ENCODE measurements at regions of chr12 and their contacts with region 1.

Region 1: DNA sequence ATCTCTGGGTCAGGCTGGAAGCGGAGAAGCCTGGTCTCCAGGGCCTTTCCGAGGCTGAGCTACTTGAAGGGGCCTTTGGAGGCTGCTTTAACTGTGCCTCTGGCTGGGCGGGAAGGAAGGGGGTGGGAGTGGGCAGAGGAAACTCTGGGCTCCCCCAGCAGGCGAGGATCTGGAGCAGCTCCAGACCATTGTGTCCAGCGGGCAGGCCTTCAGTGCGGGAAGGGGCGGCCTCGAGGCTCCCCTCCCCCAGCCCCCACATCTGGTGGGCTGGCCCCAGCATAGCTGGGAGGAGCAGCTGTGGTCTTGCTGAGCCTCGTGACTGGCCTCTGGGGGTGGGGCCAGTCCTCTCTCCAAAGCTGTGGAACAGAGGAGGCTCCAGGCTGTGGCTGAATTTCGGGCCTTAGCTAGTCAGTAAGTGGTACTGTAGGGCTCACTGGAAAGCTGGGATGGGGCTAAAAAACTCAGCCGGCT is 3.4 kb downstream of the TAMALIN start:
- DNase-seq: no peak
- H3K4me3 ChIP-seq: no peak overlapping the region
- H3K27ac ChIP-seq: no peak overlapping the region
- H3K4me1 ChIP-seq: peaks cover 11% of the 10 kb centered on the region
- H3K27me3 ChIP-seq: peaks cover 19% of the 10 kb centered on the region
- CTCF ChIP-seq: no peak

Region 2: GRCh38 chr12:52082988-52083637 is 72.9 kb after region 1 on chr12:
- CTCF ChIA-PET with region 1: interaction called, 11 read pairs
- dilution Hi-C with region 1: no loop called
- in situ Hi-C with region 1: no loop called
- intact Hi-C with region 1: no loop called
- DNase-seq: no peak
- H3K4me3 ChIP-seq: no peak overlapping the region
- H3K27ac ChIP-seq: no peak overlapping the region
- H3K4me1 ChIP-seq: peaks cover 5% of the 10 kb centered on the region
- H3K27me3 ChIP-seq: no peaks in the 10 kb centered on the region
- CTCF ChIP-seq: peak; percentile 98 to 99